ENCODE measurements at regions of chr5 and their contacts with region 1.

Region 1: DNA sequence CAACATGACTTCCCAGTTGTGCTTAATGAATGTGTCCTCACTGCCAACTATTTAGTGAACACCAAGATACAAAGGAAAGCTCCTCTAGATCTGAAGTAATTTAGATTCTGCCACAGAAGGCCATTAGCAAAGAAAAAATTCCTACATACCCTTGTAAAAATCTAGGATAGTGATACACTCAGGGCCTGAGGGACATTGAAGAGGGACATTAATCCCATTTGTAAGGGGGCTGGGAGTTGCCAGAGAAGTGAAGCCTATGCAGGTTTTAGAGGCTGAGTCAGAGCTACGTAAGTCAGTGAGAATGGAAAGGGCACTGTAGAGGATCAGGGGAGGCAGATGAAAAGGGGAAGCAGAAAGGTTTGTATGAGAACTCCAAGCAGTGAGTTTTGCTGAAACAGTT is 286.9 kb upstream of the TARS1 start:
- DNase-seq: no peak
- ATAC-seq: no peak
- H3K4me3 ChIP-seq: no peak overlapping the region
- H3K4me3 Mint-ChIP-seq: no peak overlapping the region
- H3K27ac ChIP-seq: no peak overlapping the region
- H3K27ac Mint-ChIP-seq: no peak overlapping the region
- H3K4me1 ChIP-seq: no peaks in the 10 kb centered on the region
- H3K4me1 Mint-ChIP-seq: peaks cover 2% of the 10 kb centered on the region
- H3K27me3 ChIP-seq: no peaks in the 10 kb centered on the region
- H3K27me3 Mint-ChIP-seq: no peaks in the 10 kb centered on the region
- CTCF ChIP-seq: no peak

Region 2: GRCh38 chr5:32690153-32690552 is 463.7 kb before region 1 on chr5:
- CTCF ChIA-PET with region 1: no interaction called
- POLR2A ChIA-PET with region 1: no interaction called
- intact Hi-C with region 1: no loop called
- DNase-seq: no peak
- ATAC-seq: no peak
- H3K4me3 ChIP-seq: no peak overlapping the region
- H3K4me3 Mint-ChIP-seq: no peak overlapping the region
- H3K27ac ChIP-seq: no peak overlapping the region
- H3K27ac Mint-ChIP-seq: no peak overlapping the region
- H3K4me1 ChIP-seq: no peaks in the 10 kb centered on the region
- H3K4me1 Mint-ChIP-seq: no peaks in the 10 kb centered on the region
- H3K27me3 ChIP-seq: no peaks in the 10 kb centered on the region
- H3K27me3 Mint-ChIP-seq: peaks cover 3% of the 10 kb centered on the region
- CTCF ChIP-seq: no peak

Region 3: DNA sequence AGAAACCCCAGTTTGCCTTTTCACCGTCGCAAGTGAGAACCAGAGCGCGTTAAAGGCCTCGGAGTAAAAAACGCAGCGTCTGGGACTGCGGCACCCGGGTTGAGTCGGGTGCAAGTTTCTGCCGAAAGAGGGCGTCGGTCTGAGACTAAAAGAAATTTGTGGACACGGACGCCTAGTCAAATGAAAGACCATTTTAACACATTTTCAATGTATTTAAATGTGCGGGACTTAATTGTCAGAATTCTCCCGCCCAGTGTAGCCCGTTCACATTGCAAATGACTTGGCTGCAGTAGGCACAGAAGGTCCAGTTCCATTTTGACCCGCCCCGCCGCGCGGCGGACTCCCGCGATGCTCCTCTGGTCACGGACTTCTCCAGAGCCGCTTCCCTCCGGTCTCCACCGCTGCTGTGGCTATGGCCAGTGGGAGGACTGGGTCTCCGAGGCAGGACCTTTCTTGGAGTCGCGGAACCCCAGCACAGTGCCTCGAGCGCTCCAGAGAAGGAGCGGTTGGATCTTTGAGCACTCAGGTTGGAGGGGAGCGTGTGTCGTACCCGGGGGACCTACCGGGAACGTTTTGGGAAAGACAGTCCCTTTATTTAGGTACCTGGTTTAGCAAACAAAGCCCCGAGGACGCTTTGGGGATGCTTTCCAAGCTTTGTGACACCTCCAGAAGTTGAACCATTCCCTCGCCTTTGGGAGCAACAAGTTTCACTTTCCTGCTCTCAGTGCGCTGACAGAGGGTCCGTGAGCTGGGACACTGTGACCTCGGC is 443.9 kb before region 1 on chr5:
- CTCF ChIA-PET with region 1: no interaction called
- POLR2A ChIA-PET with region 1: no interaction called
- intact Hi-C with region 1: no loop called
- DNase-seq: peak in 5 of 9 experiments; percentile 8 to 46 (median 33)
- ATAC-seq: no peak
- H3K4me3 ChIP-seq: peak overlapping the region; percentile 39 to 52
- H3K4me3 Mint-ChIP-seq: peak overlapping the region; percentile 64
- H3K27ac ChIP-seq: no peak overlapping the region
- H3K27ac Mint-ChIP-seq: no peak overlapping the region
- H3K4me1 ChIP-seq: peaks cover 3% of the 10 kb centered on the region
- H3K4me1 Mint-ChIP-seq: peaks cover 27% of the 10 kb centered on the region
- H3K27me3 ChIP-seq: peaks cover 4 to 9% of the 10 kb centered on the region in 2 experiments
- H3K27me3 Mint-ChIP-seq: peaks cover 50% of the 10 kb centered on the region
- CTCF ChIP-seq: no peak

Region 4: GRCh38 chr5:33369485-33370472 is 215.9 kb after region 1 on chr5:
- CTCF ChIA-PET with region 1: no interaction called
- POLR2A ChIA-PET with region 1: no interaction called
- intact Hi-C with region 1: loop called in 1 of 2 experiments (anchors 5 kb)
- DNase-seq: no peak
- ATAC-seq: no peak
- H3K4me3 ChIP-seq: no peak overlapping the region
- H3K4me3 Mint-ChIP-seq: no peak overlapping the region
- H3K27ac ChIP-seq: no peak overlapping the region
- H3K27ac Mint-ChIP-seq: no peak overlapping the region
- H3K4me1 ChIP-seq: no peaks in the 10 kb centered on the region
- H3K4me1 Mint-ChIP-seq: no peaks in the 10 kb centered on the region
- H3K27me3 ChIP-seq: no peaks in the 10 kb centered on the region
- H3K27me3 Mint-ChIP-seq: no peaks in the 10 kb centered on the region
- CTCF ChIP-seq: no peak